ENCODE measurements at regions of chr4 and their contacts with region 1.

Region 1: GRCh38 chr4:52983563-52984303 is 121.6 kb downstream of the RASL11B start:
- DNase-seq: no peak
- ATAC-seq: peak; percentile 90 to 95 (median 92)
- H3K4me3 ChIP-seq: no peak overlapping the region
- H3K27ac ChIP-seq: peak overlapping the region in 1 of 4 donors; percentile 24
- H3K4me1 ChIP-seq: peaks cover 0 to 11% (median 5%) of the 10 kb centered on the region in 3 donors
- H3K27me3 ChIP-seq: no peaks in the 10 kb centered on the region
- CTCF ChIP-seq: peak; percentile 55 to 71 (median 56)

Region 2: GRCh38 chr4:52376132-52376704 is 607.5 kb before region 1 on chr4:
- intact Hi-C with region 1: loop called in 1 of 3 experiments (anchors 10 kb)
- DNase-seq: peak in 1 of 6 donors; percentile 18
- ATAC-seq: peak in 1 of 4 donors; percentile 39
- H3K4me3 ChIP-seq: no peak overlapping the region
- H3K27ac ChIP-seq: no peak overlapping the region
- H3K4me1 ChIP-seq: no peaks in the 10 kb centered on the region
- H3K27me3 ChIP-seq: no peaks in the 10 kb centered on the region
- CTCF ChIP-seq: peak; percentile 14 to 55 (median 44)

Region 3: DNA sequence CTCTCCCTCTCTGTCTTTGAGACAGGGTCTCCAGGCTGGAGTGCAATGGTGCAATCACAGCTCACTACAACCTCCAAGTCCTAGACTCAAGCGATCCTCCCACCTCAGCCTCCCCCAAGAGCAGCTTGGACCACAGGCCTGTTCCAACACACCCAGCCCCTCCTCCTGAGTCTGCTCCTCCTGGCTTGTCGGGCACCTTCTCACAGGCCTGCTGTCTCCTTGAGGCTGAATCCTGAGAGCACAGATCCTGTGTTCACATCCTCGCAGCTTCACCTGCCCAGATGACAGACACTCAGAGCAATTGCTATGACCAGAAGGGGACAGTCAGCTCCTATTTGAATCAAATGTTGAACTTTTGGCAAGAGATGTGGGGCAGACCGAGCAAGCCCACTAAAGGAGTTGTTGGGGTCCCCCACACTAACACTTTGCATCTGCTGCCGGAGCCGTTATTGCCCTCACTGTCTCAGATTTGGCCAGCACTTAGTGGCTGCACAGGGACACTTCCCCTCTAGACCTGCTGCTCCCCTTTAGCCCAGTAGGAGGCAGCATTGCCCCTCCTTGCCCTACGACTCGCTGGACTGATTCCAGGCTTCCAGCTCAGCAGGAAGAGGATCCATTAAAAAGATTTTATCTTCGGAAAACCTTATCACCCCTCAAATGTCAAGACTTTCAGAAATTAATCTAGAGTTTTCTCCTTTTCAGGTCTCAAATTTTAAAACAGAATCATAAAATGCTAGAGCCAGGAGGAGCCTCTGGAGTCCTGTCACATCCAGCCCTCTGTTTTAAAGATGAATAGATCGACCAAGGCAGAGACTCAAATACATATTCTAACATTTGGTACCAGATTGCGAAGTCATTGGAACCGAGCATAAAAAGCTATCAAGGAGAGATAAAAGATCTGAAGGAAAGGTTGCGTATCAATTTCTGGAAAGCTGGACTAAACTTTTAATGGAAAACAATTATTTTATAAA is 438.3 kb before region 1 on chr4:
- intact Hi-C with region 1: loop called in 2 of 3 experiments (anchors 5 to 10 kb)
- DNase-seq: peak; percentile 54 to 87 (median 82)
- ATAC-seq: peak; percentile 87 to 100 (median 99)
- H3K4me3 ChIP-seq: no peak overlapping the region
- H3K27ac ChIP-seq: no peak overlapping the region
- H3K4me1 ChIP-seq: no peaks in the 10 kb centered on the region
- H3K27me3 ChIP-seq: no peaks in the 10 kb centered on the region
- CTCF ChIP-seq: peak; percentile 84 to 90 (median 87)

Measured in pancreas (tissue), 10 donors.